ENCODE measurements at regions of chr19 and their contacts with region 1.

Region 1: GRCh38 chr19:45569619-45570421 is 14.8 kb downstream of the OPA3 start:
- DNase-seq: peak; percentile 56
- ATAC-seq: peak; percentile 40; the same call in 1 of the 2 replicates
- H3K4me3 ChIP-seq: no peak overlapping the region
- H3K27ac ChIP-seq: peak overlapping the region; percentile 99
- H3K4me1 ChIP-seq: peaks cover 30% of the 10 kb centered on the region
- H3K27me3 ChIP-seq: no peaks in the 10 kb centered on the region
- CTCF ChIP-seq: peak; percentile 79

Region 2: GRCh38 chr19:45523642-45524256 is 46.1 kb before region 1 on chr19:
- CTCF ChIA-PET with region 1: no interaction called
- POLR2A ChIA-PET with region 1: no interaction called
- intact Hi-C with region 1: loop called (anchors 2 kb)
- DNase-seq: peak; percentile 83
- ATAC-seq: peak; percentile 46
- H3K4me3 ChIP-seq: no peak overlapping the region
- H3K27ac ChIP-seq: no peak overlapping the region
- H3K4me1 ChIP-seq: peaks cover 9% of the 10 kb centered on the region
- H3K27me3 ChIP-seq: no peaks in the 10 kb centered on the region
- CTCF ChIP-seq: peak; percentile 82

Region 3: GRCh38 chr19:45528651-45529419 is 41.0 kb before region 1 on chr19:
- CTCF ChIA-PET with region 1: interaction called, 10 read pairs
- POLR2A ChIA-PET with region 1: no interaction called
- intact Hi-C with region 1: loop called (anchors 2 kb)
- DNase-seq: peak; percentile 86
- ATAC-seq: peak; percentile 67
- H3K4me3 ChIP-seq: peak overlapping the region; percentile 75
- H3K27ac ChIP-seq: peak overlapping the region; percentile 86
- H3K4me1 ChIP-seq: peaks cover 16% of the 10 kb centered on the region
- H3K27me3 ChIP-seq: no peaks in the 10 kb centered on the region
- CTCF ChIP-seq: peak; percentile 52

Region 4: GRCh38 chr19:45547976-45548609 is 21.7 kb before region 1 on chr19:
- CTCF ChIA-PET with region 1: no interaction called
- POLR2A ChIA-PET with region 1: no interaction called
- intact Hi-C with region 1: no loop called
- DNase-seq: peak; percentile 96
- ATAC-seq: peak; percentile 96
- H3K4me3 ChIP-seq: no peak overlapping the region
- H3K27ac ChIP-seq: peak overlapping the region; percentile 97
- H3K4me1 ChIP-seq: peaks cover 24% of the 10 kb centered on the region
- H3K27me3 ChIP-seq: no peaks in the 10 kb centered on the region
- CTCF ChIP-seq: no peak

Region 5: DNA sequence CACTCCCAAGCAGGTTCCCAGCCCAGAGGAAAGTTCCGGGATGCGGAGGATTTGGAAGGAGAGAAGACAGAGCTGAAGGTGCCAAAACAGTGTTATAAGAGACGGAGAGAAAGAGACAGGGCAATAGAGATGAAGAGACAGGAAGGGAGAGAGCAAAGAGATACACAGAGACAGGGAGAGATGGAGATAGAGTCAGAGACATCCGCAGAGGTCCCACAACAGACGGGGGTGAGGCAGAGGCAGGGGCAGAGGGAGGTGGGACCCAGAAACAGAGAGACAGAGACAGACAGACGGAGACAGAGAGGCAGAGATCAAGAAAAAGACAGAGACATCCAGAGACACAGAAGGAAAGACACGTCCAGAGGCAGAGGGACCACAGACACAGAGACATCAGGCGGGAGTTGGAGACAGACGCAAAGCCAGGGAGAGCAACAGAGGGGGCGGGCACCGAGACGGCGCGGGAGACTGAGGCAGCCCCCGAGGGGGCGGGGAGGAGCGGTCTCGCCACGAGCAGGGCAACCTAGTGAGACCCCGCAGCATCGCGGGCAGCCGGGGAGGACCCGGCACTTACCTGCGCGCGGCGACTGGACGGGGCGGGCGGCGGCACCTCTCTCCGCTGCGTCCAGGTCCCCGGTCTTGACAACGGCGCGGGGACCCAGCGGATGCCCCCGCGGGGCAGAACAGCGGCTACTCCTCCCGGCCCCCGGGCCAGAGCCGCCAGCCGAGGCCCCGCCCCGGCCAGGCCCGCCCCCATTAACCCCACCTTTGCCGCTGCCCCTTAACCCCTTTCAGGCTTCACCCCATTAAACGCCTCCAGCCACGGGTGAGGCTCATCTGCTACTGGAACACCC is 31.9 kb after region 1 on chr19 and contains the start of gene GPR4:
- CTCF ChIA-PET with region 1: no interaction called
- POLR2A ChIA-PET with region 1: no interaction called
- intact Hi-C with region 1: no loop called
- DNase-seq: peak; percentile 6
- ATAC-seq: peak; percentile 49
- H3K4me3 ChIP-seq: peak within 1 kb of the TSS; percentile 65
- H3K27ac ChIP-seq: no peak within 1 kb of the TSS
- H3K4me1 ChIP-seq: peaks cover 15% of the 10 kb centered on the region
- H3K27me3 ChIP-seq: no peaks in the 10 kb centered on the region
- CTCF ChIP-seq: no peak
- total RNA-seq, gene GPR4: 3.1 and 3.7 TPM in 2 replicates

Measured in PC-3 (cell line).